ENCODE measurements at regions of chr5 and their contacts with region 1.

Region 1: DNA sequence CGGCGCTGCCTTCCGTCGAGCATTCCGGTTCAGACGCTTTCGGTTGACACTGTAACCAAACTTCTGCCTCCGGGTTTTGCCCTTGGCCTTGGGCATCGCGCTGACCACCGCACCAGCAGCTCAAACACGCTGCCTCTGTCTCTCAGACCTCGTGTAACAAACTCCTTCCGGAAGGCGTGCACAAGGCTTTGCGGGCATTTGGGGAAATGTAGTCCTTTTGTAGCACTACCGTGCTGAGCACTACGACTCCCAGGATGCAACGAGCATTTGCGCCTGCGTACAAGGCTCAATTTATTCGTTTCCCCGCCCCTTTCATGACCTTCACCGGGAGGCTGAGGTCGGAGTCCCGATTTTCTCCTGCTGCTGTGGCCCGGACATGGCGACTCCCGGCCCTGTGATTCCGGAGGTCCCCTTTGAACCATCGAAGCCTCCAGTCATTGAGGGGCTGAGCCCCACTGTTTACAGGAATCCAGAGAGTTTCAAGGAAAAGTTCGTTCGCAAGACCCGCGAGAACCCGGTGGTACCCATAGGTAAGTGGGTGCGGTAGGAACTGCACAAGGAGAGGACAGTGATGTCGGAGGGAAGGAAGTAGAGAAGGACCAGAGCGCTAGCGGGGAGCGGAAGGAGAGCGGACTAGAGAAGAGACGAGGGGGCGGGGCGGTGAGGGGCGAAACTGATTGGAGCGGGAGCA is at the starts of genes HIGD2A and NOP16:
- DNase-seq: peak; percentile 96 to 100 (median 99)
- ATAC-seq: peak; percentile 87
- H3K4me3 ChIP-seq: peak within 1 kb of the TSS; percentile 79
- H3K4me3 Mint-ChIP-seq: peak within 1 kb of the TSS; percentile 98
- H3K27ac ChIP-seq: peak within 1 kb of the TSS; percentile 87 to 95
- H3K27ac Mint-ChIP-seq: peak within 1 kb of the TSS; percentile 97
- H3K4me1 ChIP-seq: peaks cover 33% of the 10 kb centered on the region
- H3K4me1 Mint-ChIP-seq: peaks cover 38% of the 10 kb centered on the region
- H3K27me3 ChIP-seq: no peaks in the 10 kb centered on the region
- H3K27me3 Mint-ChIP-seq: no peaks in the 10 kb centered on the region
- CTCF ChIP-seq: no peak
- total RNA-seq, gene HIGD2A: 98.2 to 104 TPM
- total RNA-seq, gene NOP16: 12.0 to 14.5 TPM

Region 2: GRCh38 chr5:176361437-176362232 is 27.0 kb before region 1 on chr5 and contains the start of gene KIAA1191:
- CTCF ChIA-PET with region 1: interaction called, 3 read pairs
- POLR2A ChIA-PET with region 1: interaction called, 77 read pairs
- intact Hi-C with region 1: loop called (anchors 1 kb)
- DNase-seq: peak; percentile 89 to 98 (median 94)
- ATAC-seq: peak; percentile 92
- H3K4me3 ChIP-seq: peak within 1 kb of the TSS; percentile 98
- H3K4me3 Mint-ChIP-seq: peak within 1 kb of the TSS; percentile 96
- H3K27ac ChIP-seq: peak within 1 kb of the TSS; percentile 69 to 79
- H3K27ac Mint-ChIP-seq: peak within 1 kb of the TSS; percentile 87
- H3K4me1 ChIP-seq: peaks cover 41% of the 10 kb centered on the region
- H3K4me1 Mint-ChIP-seq: peaks cover 48% of the 10 kb centered on the region
- H3K27me3 ChIP-seq: no peaks in the 10 kb centered on the region
- H3K27me3 Mint-ChIP-seq: no peaks in the 10 kb centered on the region
- CTCF ChIP-seq: no peak
- total RNA-seq, gene KIAA1191: 64.8 TPM

Region 3: GRCh38 chr5:176405656-176406427 is 17.3 kb after region 1 on chr5:
- CTCF ChIA-PET with region 1: no interaction called
- POLR2A ChIA-PET with region 1: no interaction called
- intact Hi-C with region 1: no loop called
- DNase-seq: peak in 1 of 14 experiments; percentile 8
- ATAC-seq: no peak
- H3K4me3 ChIP-seq: no peak overlapping the region
- H3K4me3 Mint-ChIP-seq: no peak overlapping the region
- H3K27ac ChIP-seq: no peak overlapping the region
- H3K27ac Mint-ChIP-seq: no peak overlapping the region
- H3K4me1 ChIP-seq: peaks cover 3% of the 10 kb centered on the region
- H3K4me1 Mint-ChIP-seq: peaks cover 2% of the 10 kb centered on the region
- H3K27me3 ChIP-seq: no peaks in the 10 kb centered on the region
- H3K27me3 Mint-ChIP-seq: no peaks in the 10 kb centered on the region
- CTCF ChIP-seq: no peak

Region 4: DNA sequence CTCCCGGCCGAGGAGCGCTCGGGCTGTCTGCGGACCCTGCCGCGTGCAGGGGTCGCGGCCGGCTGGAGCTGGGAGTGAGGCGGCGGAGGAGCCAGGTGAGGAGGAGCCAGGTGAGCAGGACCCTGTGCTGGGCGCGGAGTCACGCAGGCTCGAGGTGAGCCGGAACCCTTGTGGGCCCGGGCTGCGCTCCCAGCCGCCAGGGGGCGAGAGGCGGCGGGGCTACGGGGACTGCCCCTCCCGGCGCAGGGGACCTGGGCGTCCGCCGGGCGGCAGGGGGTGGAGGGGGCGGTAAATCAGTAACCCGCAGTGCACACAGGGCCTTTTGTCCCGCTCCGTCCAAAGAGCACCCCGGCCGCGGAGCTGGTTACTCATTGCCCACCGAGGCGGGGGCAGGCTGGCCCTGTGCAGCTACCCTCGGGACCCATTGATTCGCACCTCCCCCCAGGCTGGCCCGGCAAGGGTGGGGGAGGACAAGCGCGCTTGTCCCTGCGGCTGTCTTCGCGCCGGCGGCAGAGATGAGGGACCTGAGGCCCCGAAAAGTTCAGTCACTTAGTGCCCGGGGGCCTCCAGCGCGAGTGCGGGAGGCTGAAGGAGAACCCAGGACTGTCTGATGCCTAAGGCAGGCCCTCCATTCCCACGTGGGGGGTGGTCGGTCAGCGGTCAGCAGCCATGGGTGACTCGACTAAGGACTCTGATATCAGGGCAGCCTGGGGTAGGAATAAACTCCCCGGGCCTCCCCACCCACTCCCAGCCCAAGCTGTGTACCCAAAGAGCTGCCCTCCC is 698.5 kb after region 1 on chr5:
- CTCF ChIA-PET with region 1: no interaction called
- POLR2A ChIA-PET with region 1: no interaction called
- intact Hi-C with region 1: loop called in 1 of 2 experiments (anchors 5 kb)
- DNase-seq: peak; percentile 39 to 85 (median 59)
- ATAC-seq: peak; percentile 87
- H3K4me3 ChIP-seq: peak overlapping the region; percentile 54
- H3K4me3 Mint-ChIP-seq: no peak overlapping the region
- H3K27ac ChIP-seq: no peak overlapping the region
- H3K27ac Mint-ChIP-seq: no peak overlapping the region
- H3K4me1 ChIP-seq: peaks cover 15% of the 10 kb centered on the region
- H3K4me1 Mint-ChIP-seq: peaks cover 6% of the 10 kb centered on the region
- H3K27me3 ChIP-seq: peaks cover 5 to 10% of the 10 kb centered on the region in 2 experiments
- H3K27me3 Mint-ChIP-seq: peaks cover 15% of the 10 kb centered on the region
- CTCF ChIP-seq: peak; percentile 69